B cell (primary cell): ENCODE measurements at regions of chr9 and their contacts with region 1.

Region 1: DNA sequence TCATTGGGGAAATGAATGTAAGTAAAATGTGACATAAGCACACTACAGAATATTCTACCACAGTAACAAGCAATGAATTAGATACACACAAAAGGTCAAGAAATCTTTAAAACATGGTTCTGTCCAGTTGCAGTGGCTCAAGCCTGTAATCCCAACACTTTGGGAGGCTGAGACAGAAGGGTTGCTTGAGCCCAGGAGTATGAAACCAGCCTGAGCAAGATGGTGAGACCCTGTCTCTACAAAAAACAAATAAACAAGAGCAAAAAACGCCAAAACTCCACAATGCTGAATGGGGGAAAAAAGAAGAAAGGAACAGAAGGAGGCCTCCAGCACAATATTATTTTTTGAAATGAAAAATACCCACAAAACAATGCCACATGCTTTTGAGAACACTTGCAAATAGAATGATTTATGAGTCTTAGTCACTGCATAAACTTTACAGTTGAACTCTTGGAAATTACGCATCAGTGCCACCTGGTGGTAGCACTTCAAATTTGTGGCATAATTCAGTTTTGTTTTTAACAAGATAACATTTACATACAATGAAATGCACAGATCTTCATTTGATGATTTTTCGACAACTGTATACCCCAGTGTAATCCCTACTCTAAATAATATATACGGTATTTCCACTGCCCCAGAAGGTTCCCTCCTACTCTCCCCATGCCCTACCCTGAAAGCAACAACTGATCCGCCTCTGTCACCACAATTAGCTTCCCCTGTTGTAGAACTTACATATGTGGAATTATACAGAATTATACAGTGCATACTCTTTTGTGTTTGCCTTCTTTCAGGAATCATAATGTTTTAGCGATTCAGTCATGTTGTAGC is 14.4 kb upstream of the SPINK4 start:
- DNase-seq: peak; percentile 82
- ATAC-seq: peak; percentile 44
- H3K4me3 ChIP-seq: no peak overlapping the region
- H3K4me3 Mint-ChIP-seq: no peak overlapping the region
- H3K27ac ChIP-seq: no peak overlapping the region
- H3K27ac Mint-ChIP-seq: no peak overlapping the region
- H3K4me1 ChIP-seq: peaks cover 35 to 46% of the 10 kb centered on the region in 2 donors
- H3K4me1 Mint-ChIP-seq: peaks cover 49% of the 10 kb centered on the region
- H3K27me3 ChIP-seq: no peaks in the 10 kb centered on the region
- H3K27me3 Mint-ChIP-seq: no peaks in the 10 kb centered on the region
- CTCF ChIP-seq: peak; percentile 86

Region 2: GRCh38 chr9:32136700-32137339 is 1088.7 kb before region 1 on chr9:
- CTCF ChIA-PET with region 1: no interaction called
- POLR2A ChIA-PET with region 1: no interaction called
- intact Hi-C with region 1: no loop called
- DNase-seq: no peak
- ATAC-seq: no peak
- H3K4me3 ChIP-seq: no peak overlapping the region
- H3K4me3 Mint-ChIP-seq: no peak overlapping the region
- H3K27ac ChIP-seq: no peak overlapping the region
- H3K27ac Mint-ChIP-seq: no peak overlapping the region
- H3K4me1 ChIP-seq: no peaks in the 10 kb centered on the region
- H3K4me1 Mint-ChIP-seq: no peaks in the 10 kb centered on the region
- H3K27me3 ChIP-seq: no peaks in the 10 kb centered on the region
- H3K27me3 Mint-ChIP-seq: no peaks in the 10 kb centered on the region
- CTCF ChIP-seq: no peak

Region 3: DNA sequence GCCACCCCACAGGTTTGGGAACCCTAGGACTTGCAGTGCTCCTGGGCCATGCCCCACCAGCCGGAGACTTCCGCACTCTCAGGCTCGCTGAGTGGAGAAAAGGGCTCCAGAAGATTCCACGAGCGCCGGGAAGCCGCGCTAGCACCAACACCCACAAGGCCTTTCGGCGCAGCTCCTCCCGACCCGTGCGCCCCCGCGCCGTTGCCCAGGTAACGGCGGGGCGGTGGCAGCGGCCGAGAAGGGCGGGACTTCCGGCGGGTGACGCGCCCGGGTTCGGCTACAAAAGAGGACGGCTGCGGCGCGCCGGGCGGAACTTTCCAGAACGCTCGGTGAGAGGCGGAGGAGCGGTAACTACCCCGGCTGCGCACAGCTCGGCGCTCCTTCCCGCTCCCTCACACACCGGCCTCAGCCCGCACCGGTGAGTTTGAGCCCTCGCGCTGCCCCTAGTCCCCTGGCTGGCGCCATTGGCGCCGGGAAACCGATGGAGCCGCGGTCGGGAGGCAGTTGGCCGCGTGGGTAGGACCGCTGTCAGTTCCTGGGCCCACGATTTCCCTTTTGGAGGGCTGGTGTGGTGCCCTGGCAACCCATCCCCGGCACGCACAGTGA is 200.5 kb before region 1 on chr9 and contains the start of gene DNAJA1:
- CTCF ChIA-PET with region 1: interaction called, 5 read pairs
- POLR2A ChIA-PET with region 1: interaction called, 3 read pairs
- intact Hi-C with region 1: loop called (anchors 5 kb)
- DNase-seq: peak; percentile 96
- ATAC-seq: peak; percentile 83
- H3K4me3 ChIP-seq: peak within 1 kb of the TSS; percentile 74 to 100 (median 100)
- H3K4me3 Mint-ChIP-seq: peak within 1 kb of the TSS; percentile 97
- H3K27ac ChIP-seq: peak within 1 kb of the TSS; percentile 99
- H3K27ac Mint-ChIP-seq: peak within 1 kb of the TSS; percentile 95
- H3K4me1 ChIP-seq: peaks cover 17 to 34% of the 10 kb centered on the region in 2 donors
- H3K4me1 Mint-ChIP-seq: peaks cover 59% of the 10 kb centered on the region
- H3K27me3 ChIP-seq: no peaks in the 10 kb centered on the region
- H3K27me3 Mint-ChIP-seq: no peaks in the 10 kb centered on the region
- CTCF ChIP-seq: no peak
- total RNA-seq, gene DNAJA1: 66.6 and 68.6 TPM in 2 replicates

Region 4: DNA sequence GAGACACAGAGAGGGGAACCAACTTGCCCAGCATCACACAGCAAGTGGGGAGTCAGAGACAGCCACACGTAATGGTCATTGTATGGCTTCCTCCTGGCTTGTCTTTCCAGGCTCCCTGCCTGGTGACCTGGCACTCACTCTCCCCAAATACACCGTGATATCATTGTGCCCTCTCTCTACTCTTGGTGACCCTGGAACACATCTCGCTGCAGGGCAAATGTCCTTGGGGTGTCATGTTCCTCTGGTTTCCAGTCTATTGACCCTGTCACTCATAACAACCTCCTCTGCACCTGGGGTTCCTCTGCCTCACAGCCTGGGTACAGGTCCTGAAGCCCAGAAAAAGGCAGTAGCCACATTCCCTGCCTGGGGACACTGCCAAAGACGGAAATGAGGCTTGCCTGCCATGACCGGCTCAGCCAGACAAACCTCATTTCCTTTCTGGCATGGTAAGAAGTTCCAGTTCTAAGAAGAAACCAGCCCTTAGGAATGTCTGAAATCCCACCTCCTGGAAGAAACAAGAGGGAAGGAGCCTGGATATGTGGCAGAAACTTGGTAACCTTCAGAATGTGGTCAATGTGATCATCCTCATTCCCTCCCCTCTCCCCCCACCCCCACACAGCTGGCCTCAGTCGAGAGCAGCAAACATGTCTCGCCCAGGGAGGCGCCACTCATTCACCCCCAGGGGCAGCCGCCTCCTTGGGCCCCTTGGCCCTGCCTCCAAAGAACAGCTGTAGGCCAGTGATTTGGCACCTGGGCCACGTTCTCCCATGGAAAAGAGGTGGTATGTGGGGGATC is 118.5 kb before region 1 on chr9:
- CTCF ChIA-PET with region 1: interaction called, 18 read pairs
- POLR2A ChIA-PET with region 1: interaction called, 3 read pairs
- intact Hi-C with region 1: no loop called
- DNase-seq: no peak
- ATAC-seq: peak; percentile 22
- H3K4me3 ChIP-seq: no peak overlapping the region
- H3K4me3 Mint-ChIP-seq: no peak overlapping the region
- H3K27ac ChIP-seq: no peak overlapping the region
- H3K27ac Mint-ChIP-seq: peak overlapping the region; percentile 67
- H3K4me1 ChIP-seq: peaks cover 4 to 22% of the 10 kb centered on the region in 2 donors
- H3K4me1 Mint-ChIP-seq: peaks cover 52% of the 10 kb centered on the region
- H3K27me3 ChIP-seq: no peaks in the 10 kb centered on the region
- H3K27me3 Mint-ChIP-seq: no peaks in the 10 kb centered on the region
- CTCF ChIP-seq: no peak

Region 5: DNA sequence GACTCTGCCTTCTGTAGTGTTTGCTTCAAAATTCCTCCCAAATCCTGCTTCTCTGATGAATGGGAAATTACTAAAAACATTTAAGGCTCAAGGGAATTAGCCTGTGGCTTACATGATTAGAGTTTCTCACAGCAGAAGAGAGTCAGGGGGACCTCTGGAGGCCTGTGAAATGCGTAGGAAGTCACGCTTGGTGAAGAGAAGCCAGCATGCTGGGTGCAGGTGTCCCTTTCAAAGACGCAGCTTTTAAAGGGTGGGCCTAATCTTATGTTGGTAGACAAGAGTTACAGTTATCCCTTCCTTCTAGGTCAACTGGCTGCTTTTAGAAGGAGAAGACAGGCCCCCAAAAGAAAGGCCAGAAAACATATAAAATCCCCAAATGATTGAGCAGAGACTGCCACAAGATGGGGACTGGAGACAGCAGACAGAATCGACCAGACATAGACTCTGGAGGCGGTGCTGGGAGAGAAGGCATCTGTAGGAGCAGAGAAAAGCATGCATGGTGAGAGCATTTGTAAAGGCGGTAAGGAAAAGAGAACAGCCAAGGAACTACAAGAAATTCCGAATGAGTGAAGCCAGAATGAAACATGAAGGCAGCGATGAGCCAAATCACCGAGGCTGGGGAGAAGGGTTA is 100.7 kb before region 1 on chr9:
- CTCF ChIA-PET with region 1: interaction called, 47 read pairs
- POLR2A ChIA-PET with region 1: interaction called, 8 read pairs
- intact Hi-C with region 1: loop called (anchors 1 kb)
- DNase-seq: peak; percentile 90
- ATAC-seq: peak; percentile 70
- H3K4me3 ChIP-seq: peak overlapping the region in 1 of 5 experiments; percentile 27
- H3K4me3 Mint-ChIP-seq: peak overlapping the region; percentile 80
- H3K27ac ChIP-seq: peak overlapping the region; percentile 93 to 94
- H3K27ac Mint-ChIP-seq: peak overlapping the region; percentile 88
- H3K4me1 ChIP-seq: peaks cover 65 to 80% of the 10 kb centered on the region in 2 donors
- H3K4me1 Mint-ChIP-seq: peaks cover 86% of the 10 kb centered on the region
- H3K27me3 ChIP-seq: no peaks in the 10 kb centered on the region
- H3K27me3 Mint-ChIP-seq: no peaks in the 10 kb centered on the region
- CTCF ChIP-seq: peak; percentile 21

Region 6: GRCh38 chr9:33139421-33140228 is 85.9 kb before region 1 on chr9:
- CTCF ChIA-PET with region 1: interaction called, 11 read pairs
- POLR2A ChIA-PET with region 1: interaction called, 3 read pairs
- intact Hi-C with region 1: no loop called
- DNase-seq: no peak
- ATAC-seq: no peak
- H3K4me3 ChIP-seq: peak overlapping the region in 1 of 5 experiments; percentile 13
- H3K4me3 Mint-ChIP-seq: peak overlapping the region; percentile 77
- H3K27ac ChIP-seq: peak overlapping the region; percentile 87
- H3K27ac Mint-ChIP-seq: peak overlapping the region; percentile 93
- H3K4me1 ChIP-seq: peaks cover 99 to 100% of the 10 kb centered on the region in 2 donors
- H3K4me1 Mint-ChIP-seq: peaks cover 96% of the 10 kb centered on the region
- H3K27me3 ChIP-seq: no peaks in the 10 kb centered on the region
- H3K27me3 Mint-ChIP-seq: no peaks in the 10 kb centered on the region
- CTCF ChIP-seq: no peak

Region 7: GRCh38 chr9:33187519-33188218 is 37.9 kb before region 1 on chr9:
- CTCF ChIA-PET with region 1: interaction called, 19 read pairs
- POLR2A ChIA-PET with region 1: no interaction called
- intact Hi-C with region 1: loop called (anchors 5 kb)
- DNase-seq: no peak
- ATAC-seq: no peak
- H3K4me3 ChIP-seq: no peak overlapping the region
- H3K4me3 Mint-ChIP-seq: no peak overlapping the region
- H3K27ac ChIP-seq: no peak overlapping the region
- H3K27ac Mint-ChIP-seq: no peak overlapping the region
- H3K4me1 ChIP-seq: peaks cover 0 to 4% of the 10 kb centered on the region in 2 donors
- H3K4me1 Mint-ChIP-seq: peaks cover 10% of the 10 kb centered on the region
- H3K27me3 ChIP-seq: no peaks in the 10 kb centered on the region
- H3K27me3 Mint-ChIP-seq: peaks cover 11% of the 10 kb centered on the region
- CTCF ChIP-seq: no peak

Region 8: GRCh38 chr9:33264473-33265177 is 39.1 kb after region 1 on chr9 and contains the starts of genes BAG1 and CHMP5:
- CTCF ChIA-PET with region 1: interaction called, 11 read pairs
- POLR2A ChIA-PET with region 1: interaction called, 5 read pairs
- intact Hi-C with region 1: no loop called
- DNase-seq: peak; percentile 99
- ATAC-seq: peak; percentile 97
- H3K4me3 ChIP-seq: peak within 1 kb of the TSS; percentile 89 to 99 (median 97)
- H3K4me3 Mint-ChIP-seq: peak within 1 kb of the TSS; percentile 88
- H3K27ac ChIP-seq: peak within 1 kb of the TSS; percentile 92 to 96
- H3K27ac Mint-ChIP-seq: peak within 1 kb of the TSS; percentile 98
- H3K4me1 ChIP-seq: peaks cover 19 to 23% of the 10 kb centered on the region in 2 donors
- H3K4me1 Mint-ChIP-seq: peaks cover 39% of the 10 kb centered on the region
- H3K27me3 ChIP-seq: no peaks in the 10 kb centered on the region
- H3K27me3 Mint-ChIP-seq: no peaks in the 10 kb centered on the region
- CTCF ChIP-seq: peak; percentile 34
- total RNA-seq, gene BAG1: 53.8 and 60.2 TPM in 2 replicates
- total RNA-seq, gene CHMP5: 28.2 and 29.7 TPM in 2 replicates